B cell (primary cell): ENCODE measurements at regions of chr2 and their contacts with region 1.

Region 1: DNA sequence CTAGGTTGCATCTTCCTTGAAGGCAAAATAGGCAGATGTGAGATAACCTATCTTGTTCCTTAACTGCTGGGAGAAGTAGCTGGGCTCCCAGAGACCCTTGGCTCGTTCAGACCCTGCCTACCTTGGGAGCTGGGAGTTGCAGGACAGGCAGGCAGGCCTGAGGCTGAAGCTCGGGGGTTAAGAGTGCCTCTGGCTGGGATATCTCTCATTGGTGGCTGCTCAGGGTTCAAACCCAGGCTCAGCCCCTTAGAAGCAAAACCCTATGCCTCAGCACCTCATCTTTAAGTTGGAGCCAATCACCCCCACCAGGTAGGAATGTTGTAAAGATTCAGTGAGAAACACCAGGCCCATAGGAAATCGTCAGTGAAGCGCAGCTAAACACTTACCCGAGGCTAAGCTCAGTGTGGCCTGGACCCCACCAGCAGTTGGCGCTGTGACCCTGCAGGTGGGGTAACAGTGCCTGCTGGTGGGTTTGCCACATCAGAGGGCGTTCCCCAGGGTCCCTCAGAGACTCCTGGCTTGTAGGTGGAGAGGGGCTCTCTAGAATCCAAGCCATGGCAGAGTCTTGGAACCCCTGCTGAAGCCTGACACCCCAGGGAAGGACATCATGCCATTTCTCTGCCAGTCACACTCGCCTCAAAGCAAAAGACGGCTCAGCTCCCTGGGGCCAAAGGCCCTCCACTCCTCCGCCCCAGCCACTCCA is 54.6 kb upstream of the GPR17 start:
- DNase-seq: peak; percentile 83
- ATAC-seq: peak; percentile 98
- H3K4me3 ChIP-seq: no peak overlapping the region
- H3K4me3 Mint-ChIP-seq: no peak overlapping the region
- H3K27ac ChIP-seq: no peak overlapping the region
- H3K27ac Mint-ChIP-seq: no peak overlapping the region
- H3K4me1 ChIP-seq: peaks cover 10 to 23% of the 10 kb centered on the region in 2 donors
- H3K4me1 Mint-ChIP-seq: peaks cover 28% of the 10 kb centered on the region
- H3K27me3 ChIP-seq: peaks cover 0 to 2% (median 0%) of the 10 kb centered on the region in 4 experiments
- H3K27me3 Mint-ChIP-seq: no peaks in the 10 kb centered on the region
- CTCF ChIP-seq: peak; percentile 95

Region 2: GRCh38 chr2:127365211-127365643 is 226.1 kb before region 1 on chr2:
- CTCF ChIA-PET with region 1: no interaction called
- POLR2A ChIA-PET with region 1: no interaction called
- intact Hi-C with region 1: no loop called
- DNase-seq: no peak
- ATAC-seq: no peak
- H3K4me3 ChIP-seq: no peak overlapping the region
- H3K4me3 Mint-ChIP-seq: no peak overlapping the region
- H3K27ac ChIP-seq: no peak overlapping the region
- H3K27ac Mint-ChIP-seq: peak overlapping the region; percentile 72
- H3K4me1 ChIP-seq: peaks cover 19 to 21% of the 10 kb centered on the region in 2 donors
- H3K4me1 Mint-ChIP-seq: peaks cover 61% of the 10 kb centered on the region
- H3K27me3 ChIP-seq: no peaks in the 10 kb centered on the region
- H3K27me3 Mint-ChIP-seq: no peaks in the 10 kb centered on the region
- CTCF ChIP-seq: no peak

Region 3: DNA sequence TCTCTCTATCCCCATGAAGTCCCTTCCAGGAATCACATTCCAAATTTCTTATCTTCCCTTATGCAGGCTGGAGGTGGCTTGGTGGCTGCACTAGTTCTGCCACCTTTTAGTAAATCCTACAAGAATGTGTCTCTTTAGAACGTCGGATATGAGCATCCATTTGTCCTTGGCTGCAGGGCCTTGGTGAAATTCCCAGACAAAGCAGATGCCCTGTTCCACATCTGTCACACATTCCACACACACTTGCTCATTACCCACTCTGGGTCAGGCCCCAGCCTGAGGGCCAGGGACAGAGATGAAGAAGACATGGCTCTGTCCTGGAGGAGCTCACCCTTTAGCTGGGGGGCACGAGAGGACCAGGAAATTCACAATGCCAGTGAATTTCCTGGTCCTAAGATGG is 23.4 kb after region 1 on chr2:
- CTCF ChIA-PET with region 1: interaction called, 22 read pairs
- POLR2A ChIA-PET with region 1: no interaction called
- intact Hi-C with region 1: no loop called
- DNase-seq: no peak
- ATAC-seq: no peak
- H3K4me3 ChIP-seq: no peak overlapping the region
- H3K4me3 Mint-ChIP-seq: no peak overlapping the region
- H3K27ac ChIP-seq: no peak overlapping the region
- H3K27ac Mint-ChIP-seq: no peak overlapping the region
- H3K4me1 ChIP-seq: peaks cover 7 to 26% of the 10 kb centered on the region in 2 donors
- H3K4me1 Mint-ChIP-seq: peaks cover 43% of the 10 kb centered on the region
- H3K27me3 ChIP-seq: peaks cover 0 to 3% (median 0%) of the 10 kb centered on the region in 4 experiments
- H3K27me3 Mint-ChIP-seq: no peaks in the 10 kb centered on the region
- CTCF ChIP-seq: no peak

Region 4: DNA sequence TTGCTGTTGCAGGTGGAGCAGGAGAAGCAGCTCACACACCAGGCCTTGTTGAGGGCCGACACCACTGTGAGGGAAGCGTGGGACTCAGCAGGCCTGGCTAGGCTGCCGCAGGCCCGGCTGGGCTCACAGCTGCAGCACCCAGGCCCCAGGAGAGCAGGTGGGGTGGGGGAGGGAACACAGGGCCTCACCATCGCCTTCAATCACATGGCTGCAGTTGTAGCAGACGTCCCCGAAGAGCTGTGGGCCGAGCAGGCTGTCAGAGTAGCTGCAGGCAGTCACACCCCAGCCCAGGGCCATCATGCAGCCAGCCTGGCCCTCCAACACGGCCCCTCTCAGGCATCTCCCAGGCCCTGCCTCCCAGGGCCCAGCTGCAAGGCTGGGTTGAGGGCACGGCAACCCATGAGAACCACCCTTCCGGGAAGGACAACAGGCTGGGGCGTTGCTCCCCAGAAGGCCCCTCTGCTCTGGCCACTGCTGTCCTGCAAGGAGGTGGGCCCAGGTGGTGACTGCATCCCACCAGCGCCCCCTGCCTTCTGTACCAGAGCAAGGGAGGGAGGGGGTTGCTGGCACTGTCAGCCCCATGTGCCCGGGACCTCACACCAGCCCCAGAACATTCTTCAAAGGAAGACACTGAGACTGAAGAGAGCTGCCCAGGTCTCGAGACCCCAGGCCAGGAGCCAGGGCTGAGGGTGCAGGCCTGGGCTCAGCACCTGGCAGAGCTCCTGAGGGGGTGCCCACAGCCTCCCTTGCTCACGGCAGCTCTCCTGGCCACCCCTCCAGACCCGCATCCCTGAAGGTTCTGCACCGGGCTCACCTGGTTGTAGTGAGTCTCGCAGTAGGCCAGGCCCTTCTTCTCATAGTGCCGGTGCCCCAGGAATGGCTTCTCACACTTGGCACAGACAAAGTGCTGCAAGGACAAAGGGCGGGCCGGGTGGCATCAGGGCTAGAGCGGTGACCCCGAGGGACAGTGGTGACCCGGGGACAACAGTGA is 49.0 kb after region 1 on chr2:
- CTCF ChIA-PET with region 1: interaction called, 553 read pairs
- POLR2A ChIA-PET with region 1: interaction called, 5 read pairs
- intact Hi-C with region 1: loop called (anchors 2 kb)
- DNase-seq: peak; percentile 82
- ATAC-seq: peak; percentile 83
- H3K4me3 ChIP-seq: no peak overlapping the region
- H3K4me3 Mint-ChIP-seq: peak overlapping the region; percentile 57
- H3K27ac ChIP-seq: peak overlapping the region; percentile 62 to 76
- H3K27ac Mint-ChIP-seq: peak overlapping the region; percentile 95
- H3K4me1 ChIP-seq: peaks cover 69 to 77% of the 10 kb centered on the region in 2 donors
- H3K4me1 Mint-ChIP-seq: peaks cover 68% of the 10 kb centered on the region
- H3K27me3 ChIP-seq: no peaks in the 10 kb centered on the region
- H3K27me3 Mint-ChIP-seq: no peaks in the 10 kb centered on the region
- CTCF ChIP-seq: peak; percentile 29

Region 5: DNA sequence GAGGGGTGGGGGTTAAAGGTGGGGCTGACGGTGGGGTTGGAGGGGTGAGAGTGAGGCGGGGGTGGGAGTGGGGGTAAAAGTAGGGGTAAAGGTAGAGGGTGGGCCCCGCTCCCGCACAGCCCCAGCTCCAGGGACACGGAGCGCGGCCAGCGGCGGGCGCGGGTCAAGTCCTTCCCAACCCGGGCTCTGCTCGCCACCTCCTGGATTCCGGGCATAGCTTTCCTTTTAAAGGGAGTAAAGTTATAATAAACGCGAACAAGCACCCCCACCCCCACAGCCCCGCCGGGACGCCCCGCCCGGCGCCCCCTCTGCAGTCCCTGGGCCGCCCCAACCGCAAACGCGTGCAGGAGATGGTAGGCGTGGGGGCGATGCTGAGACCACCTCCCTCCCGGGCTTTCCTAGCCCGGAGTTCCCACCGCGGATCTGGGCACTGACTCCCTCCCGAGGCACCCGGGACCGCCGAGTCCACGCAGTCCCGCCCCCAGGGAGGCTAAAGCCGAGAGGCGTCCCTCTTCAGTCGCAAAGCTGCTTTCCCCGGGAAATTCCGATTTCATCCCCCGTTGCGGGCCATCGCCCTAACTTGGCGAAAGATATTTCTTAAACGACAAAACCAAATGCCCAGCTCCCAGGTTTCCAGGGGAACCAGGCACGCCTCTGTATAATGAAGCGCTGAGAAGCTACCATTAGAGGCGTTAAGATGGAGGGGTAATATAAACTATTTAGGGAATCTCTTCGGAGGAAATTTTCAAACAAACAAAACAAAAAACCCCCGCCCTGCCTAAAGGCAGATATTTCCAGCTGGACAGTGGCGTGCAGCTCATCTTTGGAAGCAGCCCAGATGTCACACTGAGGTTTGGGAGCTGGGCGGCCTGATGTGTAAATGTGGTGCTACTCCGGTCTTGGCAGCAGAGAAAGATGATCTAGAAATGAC is 84.2 kb after region 1 on chr2 and contains the start of gene LIMS2:
- CTCF ChIA-PET with region 1: interaction called, 11 read pairs
- POLR2A ChIA-PET with region 1: no interaction called
- intact Hi-C with region 1: no loop called
- DNase-seq: peak; percentile 31
- ATAC-seq: peak; percentile 26
- H3K4me3 ChIP-seq: peak within 1 kb of the TSS in 4 of 5 experiments; percentile 13 to 58 (median 41)
- H3K4me3 Mint-ChIP-seq: peak within 1 kb of the TSS; percentile 88
- H3K27ac ChIP-seq: no peak within 1 kb of the TSS
- H3K27ac Mint-ChIP-seq: no peak within 1 kb of the TSS
- H3K4me1 ChIP-seq: peaks cover 12 to 19% of the 10 kb centered on the region in 2 donors
- H3K4me1 Mint-ChIP-seq: peaks cover 11% of the 10 kb centered on the region
- H3K27me3 ChIP-seq: peaks cover 0 to 41% (median 23%) of the 10 kb centered on the region in 4 experiments
- H3K27me3 Mint-ChIP-seq: peaks cover 36% of the 10 kb centered on the region
- CTCF ChIP-seq: no peak
- total RNA-seq, gene LIMS2: 4.2 and 6.7 TPM in 2 replicates

Region 6: DNA sequence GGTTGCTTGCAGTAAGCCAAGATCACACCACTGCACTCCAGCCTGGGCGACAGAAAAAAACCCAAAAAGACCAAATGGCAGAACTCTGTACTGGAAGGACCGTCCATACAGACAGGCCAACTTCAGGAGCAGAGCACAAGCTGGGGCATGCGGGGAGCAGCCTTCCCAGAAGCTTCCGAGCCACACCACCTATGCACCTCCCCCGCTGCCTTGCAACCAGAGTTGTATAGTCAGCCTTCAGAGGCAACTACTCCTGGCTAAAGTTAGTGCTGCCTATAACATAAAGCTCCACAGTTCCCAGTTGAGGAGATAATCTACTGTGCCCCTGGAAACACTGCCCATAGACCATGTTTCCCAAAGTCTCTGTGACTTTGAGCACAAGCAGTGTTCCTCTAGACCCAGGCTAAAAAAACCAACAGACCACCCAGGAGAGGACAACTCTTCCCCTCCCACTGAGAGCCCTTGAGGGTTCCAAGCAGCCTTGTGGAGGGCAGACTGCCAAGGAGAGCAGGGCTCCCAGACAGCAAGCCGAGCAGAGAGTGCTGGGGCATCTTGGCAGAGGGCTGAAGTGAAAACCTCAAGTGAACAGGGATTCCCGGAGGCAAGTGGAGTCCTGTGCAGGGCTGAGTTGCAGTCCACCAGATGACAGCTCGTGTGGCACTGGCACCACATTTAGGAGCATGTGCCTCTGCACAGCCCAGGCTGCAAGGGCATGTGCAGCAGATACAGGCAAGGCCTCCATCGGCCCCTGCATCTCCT is 116.7 kb after region 1 on chr2:
- CTCF ChIA-PET with region 1: interaction called, 36 read pairs
- POLR2A ChIA-PET with region 1: no interaction called
- intact Hi-C with region 1: no loop called
- DNase-seq: no peak
- ATAC-seq: no peak
- H3K4me3 ChIP-seq: no peak overlapping the region
- H3K4me3 Mint-ChIP-seq: no peak overlapping the region
- H3K27ac ChIP-seq: no peak overlapping the region
- H3K27ac Mint-ChIP-seq: no peak overlapping the region
- H3K4me1 ChIP-seq: peaks cover 9 to 12% of the 10 kb centered on the region in 2 donors
- H3K4me1 Mint-ChIP-seq: peaks cover 16% of the 10 kb centered on the region
- H3K27me3 ChIP-seq: no peaks in the 10 kb centered on the region
- H3K27me3 Mint-ChIP-seq: no peaks in the 10 kb centered on the region
- CTCF ChIP-seq: no peak